PC-9 (cell line): ENCODE measurements at regions of chr1 and their contacts with region 1.

Region 1: GRCh38 chr1:164772635-164773034 is 213.7 kb downstream of the PBX1 start:
- DNase-seq: peak; percentile 84 to 96
- H3K4me3 ChIP-seq: peak overlapping the region; percentile 25; the same call in 1 of the 2 replicates
- H3K27ac ChIP-seq: peak overlapping the region; percentile 98
- H3K4me1 ChIP-seq: peaks cover 80% of the 10 kb centered on the region
- H3K27me3 ChIP-seq: no peaks in the 10 kb centered on the region
- CTCF ChIP-seq: no peak

Region 2: DNA sequence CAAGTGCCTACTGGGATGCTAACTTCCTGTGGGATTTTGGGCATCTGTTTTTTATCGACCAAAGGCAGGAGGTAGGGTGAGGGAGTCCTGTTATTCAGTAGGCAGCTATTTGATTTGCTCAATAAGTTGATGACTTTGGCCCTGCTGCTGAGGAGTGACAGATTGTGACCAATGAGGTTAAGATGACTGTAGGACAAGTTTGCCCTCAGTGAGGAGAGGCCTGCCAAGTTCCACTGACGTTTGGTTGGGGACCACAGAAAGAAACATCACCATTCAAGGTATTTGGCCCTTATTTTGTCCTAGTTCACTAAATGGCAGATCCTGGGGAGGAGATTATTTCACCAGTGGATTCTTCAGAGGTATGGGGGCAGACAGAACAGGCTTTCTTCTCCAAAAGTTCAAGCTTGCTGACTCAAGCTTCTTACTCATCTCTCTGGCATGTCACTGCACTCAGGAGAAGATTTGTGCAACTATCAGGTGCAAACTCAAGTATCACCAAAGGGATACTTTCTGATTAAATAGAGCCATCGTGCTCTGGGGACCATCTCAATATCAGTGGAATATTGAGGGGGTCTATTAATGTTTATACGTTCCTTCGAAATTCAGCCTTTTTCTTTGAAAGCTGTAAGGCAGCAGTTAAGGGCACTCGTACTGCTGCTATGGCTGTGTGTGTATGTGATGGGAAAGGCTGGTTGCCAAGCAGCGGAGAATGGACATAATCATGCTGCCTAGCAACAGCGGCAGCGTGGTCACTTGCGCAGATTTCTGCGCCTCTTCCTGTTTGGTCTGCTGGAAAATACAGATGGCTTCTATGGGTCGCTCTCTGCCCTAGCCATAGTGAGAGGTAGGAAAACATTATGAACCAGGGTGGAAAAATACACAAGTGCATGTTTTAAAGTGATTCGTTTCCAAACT is 134.9 kb before region 1 on chr1:
- CTCF ChIA-PET with region 1: no interaction called
- POLR2A ChIA-PET with region 1: interaction called, 10 read pairs
- intact Hi-C with region 1: no loop called
- DNase-seq: peak; percentile 73 to 92
- H3K4me3 ChIP-seq: no peak overlapping the region
- H3K27ac ChIP-seq: peak overlapping the region; percentile 86
- H3K4me1 ChIP-seq: peaks cover 61% of the 10 kb centered on the region
- H3K27me3 ChIP-seq: no peaks in the 10 kb centered on the region
- CTCF ChIP-seq: no peak

Region 3: DNA sequence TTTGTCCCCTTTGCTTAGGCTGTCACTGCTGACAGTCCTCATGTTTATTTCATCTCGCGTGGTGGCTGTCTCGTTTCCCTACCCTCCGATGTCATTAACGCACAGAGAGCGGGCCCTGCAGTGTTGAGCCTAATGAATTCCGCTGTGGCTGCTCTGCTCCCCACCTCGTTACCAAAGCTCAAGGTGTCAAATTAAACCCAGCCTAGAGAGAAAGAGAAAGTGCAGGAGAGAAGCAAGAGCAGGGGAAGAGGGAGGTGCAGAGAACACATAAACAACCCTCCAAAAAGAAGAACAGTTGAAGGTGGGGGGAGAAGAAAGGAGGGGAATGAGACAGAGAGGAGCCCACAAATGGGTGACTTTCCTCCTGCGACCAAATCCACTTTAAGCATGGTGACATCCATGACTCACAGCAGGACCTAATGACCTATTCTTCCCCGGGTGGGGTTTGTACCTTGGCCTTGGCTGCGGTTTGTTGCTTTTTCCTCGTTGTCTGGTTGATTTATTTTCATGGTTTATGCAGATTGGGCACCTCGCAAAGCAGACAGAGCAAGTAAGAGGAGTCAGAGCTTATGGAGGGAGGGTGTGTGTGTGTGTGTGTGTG is 121.2 kb before region 1 on chr1:
- CTCF ChIA-PET with region 1: interaction called, 3 read pairs
- POLR2A ChIA-PET with region 1: no interaction called
- intact Hi-C with region 1: loop called (anchors 1 kb)
- DNase-seq: peak; percentile 72 to 92
- H3K4me3 ChIP-seq: no peak overlapping the region
- H3K27ac ChIP-seq: peak overlapping the region; percentile 98
- H3K4me1 ChIP-seq: peaks cover 78% of the 10 kb centered on the region
- H3K27me3 ChIP-seq: no peaks in the 10 kb centered on the region
- CTCF ChIP-seq: no peak

Region 4: GRCh38 chr1:164707868-164708331 is 64.7 kb before region 1 on chr1:
- CTCF ChIA-PET with region 1: no interaction called
- POLR2A ChIA-PET with region 1: no interaction called
- intact Hi-C with region 1: loop called (anchors 1 kb)
- DNase-seq: peak; percentile 48 to 50
- H3K4me3 ChIP-seq: no peak overlapping the region
- H3K27ac ChIP-seq: peak overlapping the region; percentile 83
- H3K4me1 ChIP-seq: peaks cover 33% of the 10 kb centered on the region
- H3K27me3 ChIP-seq: no peaks in the 10 kb centered on the region
- CTCF ChIP-seq: no peak

Region 5: DNA sequence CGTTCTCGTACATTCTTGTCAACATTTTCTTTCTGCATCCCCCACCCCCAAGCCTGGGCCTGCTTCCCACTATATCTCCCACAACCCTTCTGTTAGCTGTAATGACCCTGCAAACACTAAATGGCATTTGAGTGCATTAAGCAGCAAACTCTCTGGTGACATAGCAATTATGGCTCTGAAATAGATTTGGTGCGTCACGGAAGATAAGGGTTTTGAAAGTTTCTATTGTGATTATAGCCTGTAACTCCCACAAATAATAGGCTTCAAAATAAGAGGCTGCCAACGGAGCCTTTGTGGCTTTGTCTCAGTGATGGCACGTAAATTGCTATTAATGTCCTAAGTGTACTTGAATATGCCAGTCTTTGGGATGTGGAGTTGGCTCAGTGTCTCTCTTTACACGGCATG is 64.0 kb after region 1 on chr1:
- CTCF ChIA-PET with region 1: no interaction called
- POLR2A ChIA-PET with region 1: no interaction called
- intact Hi-C with region 1: no loop called
- DNase-seq: no peak
- H3K4me3 ChIP-seq: no peak overlapping the region
- H3K27ac ChIP-seq: no peak overlapping the region
- H3K4me1 ChIP-seq: no peaks in the 10 kb centered on the region
- H3K27me3 ChIP-seq: no peaks in the 10 kb centered on the region
- CTCF ChIP-seq: no peak